ENCODE measurements at regions of chr6 and their contacts with region 1.

Region 1: DNA sequence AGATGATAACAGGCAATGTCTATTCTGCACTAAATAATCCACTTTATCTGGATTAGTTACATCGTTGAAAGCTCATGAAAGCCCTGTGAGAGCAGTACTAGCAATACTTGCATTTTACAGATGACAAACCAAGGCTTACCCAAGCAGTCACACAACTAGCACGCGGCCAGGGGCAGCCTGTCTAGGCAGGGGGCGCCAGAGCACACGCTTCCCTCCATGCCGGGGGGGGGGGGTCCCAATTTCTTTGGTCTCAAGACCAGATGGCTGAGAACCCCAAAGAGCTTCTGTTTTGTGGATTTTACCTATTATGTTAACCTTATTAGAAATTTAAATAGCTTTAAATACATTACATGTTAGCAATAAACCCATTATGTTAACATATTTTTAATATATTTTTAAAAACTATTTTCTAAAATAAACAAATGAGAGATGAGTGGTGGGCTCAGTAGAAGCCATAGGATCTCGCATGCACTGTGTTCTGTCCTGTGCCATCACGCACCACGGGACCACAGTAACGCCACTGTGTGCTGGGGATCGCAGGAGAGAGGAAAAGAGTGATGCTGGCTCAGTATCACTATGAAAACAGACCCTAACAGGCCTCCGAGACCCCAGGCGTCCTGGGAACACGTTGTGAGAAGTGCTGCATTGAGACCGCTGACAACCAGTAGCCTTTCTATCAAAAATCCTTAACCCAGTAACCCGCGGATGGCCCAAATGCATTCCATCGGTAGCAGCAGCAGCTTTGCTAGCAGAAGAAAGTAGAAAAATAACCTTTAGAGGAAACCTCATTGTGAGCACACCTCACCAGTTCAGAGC is 5.3 kb upstream of the PRR18 start:
- DNase-seq: peak; percentile 45
- H3K4me3 Mint-ChIP-seq: no peak overlapping the region
- H3K27ac Mint-ChIP-seq: no peak overlapping the region
- H3K4me1 Mint-ChIP-seq: peaks cover 2% of the 10 kb centered on the region
- H3K27me3 Mint-ChIP-seq: peaks cover 16% of the 10 kb centered on the region
- CTCF ChIP-seq: peak; percentile 65

Region 2: GRCh38 chr6:166293731-166294584 is 19.5 kb before region 1 on chr6:
- CTCF ChIA-PET with region 1: interaction called, 10 read pairs
- intact Hi-C with region 1: no loop called
- DNase-seq: no peak
- H3K4me3 Mint-ChIP-seq: no peak overlapping the region
- H3K27ac Mint-ChIP-seq: no peak overlapping the region
- H3K4me1 Mint-ChIP-seq: no peaks in the 10 kb centered on the region
- H3K27me3 Mint-ChIP-seq: peaks cover 100% of the 10 kb centered on the region
- CTCF ChIP-seq: no peak

Measured in Calu3 (cell line).